Activated CD4-positive, alpha-beta memory T cell treated with anti-CD3 and anti-CD28 coated beads, Interleukin-2, amount 10 ng/mL, durations not matched to agents 7 days and 5 days (primary cell): ENCODE measurements at regions of chr11 and their contacts with region 1.

Region 1: GRCh38 chr11:128157423-128158298 is 429.7 kb downstream of the ETS1 start:
- DNase-seq: peak; percentile 52
- H3K4me3 Mint-ChIP-seq: peak overlapping the region; percentile 53
- H3K27ac Mint-ChIP-seq: peak overlapping the region; percentile 55
- H3K4me1 Mint-ChIP-seq: peaks cover 7% of the 10 kb centered on the region
- H3K27me3 Mint-ChIP-seq: peaks cover 8% of the 10 kb centered on the region

Region 2: DNA sequence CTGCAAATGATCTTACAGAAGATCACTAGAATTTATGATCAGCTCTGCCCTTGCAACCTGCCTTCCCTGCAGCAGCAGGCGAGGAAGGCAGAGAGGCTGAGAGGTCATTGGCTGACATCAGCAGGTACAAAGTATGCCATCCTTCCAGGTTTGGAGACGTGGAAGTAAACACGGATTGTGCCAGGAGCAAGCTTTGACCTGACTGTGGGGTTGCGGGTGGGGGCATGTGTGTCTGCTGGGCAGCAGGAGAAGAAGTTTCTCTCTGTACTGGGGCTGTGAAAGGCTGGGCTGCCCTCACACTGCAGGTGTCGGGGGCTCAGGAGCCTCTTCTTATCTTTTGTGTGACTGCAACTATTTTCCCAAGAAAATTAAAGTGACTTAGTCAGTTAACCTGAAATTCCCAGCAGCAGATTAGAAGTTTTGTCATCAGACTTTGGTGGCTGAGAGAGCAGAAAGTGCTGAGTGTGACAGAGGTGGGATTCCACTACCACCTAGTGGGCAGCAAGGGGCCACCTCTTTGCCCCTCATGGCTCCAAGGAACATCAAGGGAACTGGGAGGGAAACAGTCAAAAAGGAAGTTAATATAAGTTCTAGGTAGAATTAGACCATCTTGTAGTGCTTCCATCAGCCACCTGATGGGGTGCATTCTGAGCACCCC is 136.2 kb before region 1 on chr11:
- CTCF ChIA-PET with region 1: interaction called, 12 read pairs
- POLR2A ChIA-PET with region 1: no interaction called
- DNase-seq: no peak
- H3K4me3 Mint-ChIP-seq: no peak overlapping the region
- H3K27ac Mint-ChIP-seq: no peak overlapping the region
- H3K4me1 Mint-ChIP-seq: peaks cover 16% of the 10 kb centered on the region
- H3K27me3 Mint-ChIP-seq: peaks cover 9% of the 10 kb centered on the region

Region 3: DNA sequence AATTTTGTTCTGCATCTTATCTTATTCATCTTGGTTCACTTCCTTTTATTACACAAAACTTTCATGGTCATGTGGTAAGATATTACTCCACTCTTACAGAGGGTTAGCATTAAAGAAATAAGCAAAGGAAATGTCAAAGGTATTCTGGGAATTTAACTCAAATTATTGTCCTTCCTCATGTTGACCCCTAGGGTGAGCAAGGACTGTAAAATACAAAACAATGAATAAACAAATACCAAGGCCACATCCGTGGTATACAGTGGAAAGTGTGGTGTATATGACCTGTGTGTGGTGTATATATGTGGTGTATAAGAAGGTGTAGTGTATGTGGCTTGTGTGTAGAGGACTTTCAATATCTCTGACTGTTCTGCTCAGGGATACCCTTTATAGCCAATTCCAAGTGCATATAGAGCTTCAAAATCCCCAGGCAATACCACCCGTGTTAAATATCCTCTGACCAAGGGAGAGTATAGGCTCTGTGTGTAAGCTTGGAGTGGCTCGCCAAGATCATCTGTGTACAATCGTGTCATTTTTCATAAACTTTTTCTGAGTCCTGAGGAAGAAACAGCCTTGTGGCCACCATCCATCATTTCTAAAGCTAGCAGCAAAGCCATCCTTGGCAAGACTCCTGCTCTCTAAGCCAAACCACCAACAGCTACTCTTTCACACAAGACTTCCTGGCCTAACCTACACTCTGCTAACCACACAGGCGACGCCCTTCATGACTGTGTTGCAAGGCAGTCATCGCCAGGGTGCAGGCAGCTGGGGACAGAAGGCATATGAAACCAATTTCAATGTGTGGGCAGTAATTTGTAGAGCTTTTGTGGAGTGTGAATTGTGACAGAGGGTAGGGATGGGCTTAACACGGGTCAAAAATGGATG is 118.3 kb before region 1 on chr11:
- CTCF ChIA-PET with region 1: interaction called, 106 read pairs
- POLR2A ChIA-PET with region 1: interaction called, 14 read pairs
- DNase-seq: peak; percentile 89
- H3K4me3 Mint-ChIP-seq: peak overlapping the region; percentile 64
- H3K27ac Mint-ChIP-seq: peak overlapping the region; percentile 98
- H3K4me1 Mint-ChIP-seq: peaks cover 48% of the 10 kb centered on the region
- H3K27me3 Mint-ChIP-seq: no peaks in the 10 kb centered on the region

Region 4: DNA sequence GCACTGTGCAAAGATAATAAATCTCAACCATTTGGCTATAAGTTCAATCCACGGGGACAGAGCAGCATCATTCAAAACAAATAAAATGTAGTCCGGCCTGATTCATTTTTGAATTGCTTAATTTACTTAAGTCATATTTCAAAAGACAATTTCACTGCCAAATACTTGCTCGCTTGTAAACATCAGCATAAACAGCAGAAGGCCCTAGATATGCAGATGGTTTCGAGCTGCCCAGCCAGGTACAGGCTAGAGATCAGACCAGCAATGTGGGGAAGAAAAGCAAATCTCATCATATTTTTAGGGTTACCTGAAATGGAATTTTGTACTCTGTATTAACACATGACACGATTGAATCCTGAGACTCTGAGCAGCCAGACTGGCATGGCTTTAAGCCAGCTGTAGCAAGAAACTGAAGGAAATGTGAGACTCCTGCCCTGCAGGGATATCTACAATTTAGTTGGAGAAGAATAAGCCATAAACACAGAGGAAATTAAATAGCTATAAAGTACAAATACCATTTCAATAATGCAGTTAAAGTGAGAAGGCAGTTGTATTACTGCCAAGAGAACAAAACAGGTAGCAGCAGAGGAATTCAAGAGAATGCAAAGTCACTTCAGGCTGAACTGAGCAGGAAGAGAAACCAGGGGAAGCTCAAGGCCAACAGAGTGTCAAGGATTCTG is 10.6 kb before region 1 on chr11:
- CTCF ChIA-PET with region 1: interaction called, 25 read pairs
- POLR2A ChIA-PET with region 1: no interaction called
- DNase-seq: no peak
- H3K4me3 Mint-ChIP-seq: no peak overlapping the region
- H3K27ac Mint-ChIP-seq: no peak overlapping the region
- H3K4me1 Mint-ChIP-seq: no peaks in the 10 kb centered on the region
- H3K27me3 Mint-ChIP-seq: peaks cover 3% of the 10 kb centered on the region

Region 5: GRCh38 chr11:128831174-128832120 is 673.8 kb after region 1 on chr11:
- CTCF ChIA-PET with region 1: interaction called, 54 read pairs
- POLR2A ChIA-PET with region 1: interaction called, 4 read pairs
- DNase-seq: peak; percentile 89
- H3K4me3 Mint-ChIP-seq: no peak overlapping the region
- H3K27ac Mint-ChIP-seq: peak overlapping the region; percentile 29
- H3K4me1 Mint-ChIP-seq: peaks cover 28% of the 10 kb centered on the region
- H3K27me3 Mint-ChIP-seq: no peaks in the 10 kb centered on the region

Region 6: DNA sequence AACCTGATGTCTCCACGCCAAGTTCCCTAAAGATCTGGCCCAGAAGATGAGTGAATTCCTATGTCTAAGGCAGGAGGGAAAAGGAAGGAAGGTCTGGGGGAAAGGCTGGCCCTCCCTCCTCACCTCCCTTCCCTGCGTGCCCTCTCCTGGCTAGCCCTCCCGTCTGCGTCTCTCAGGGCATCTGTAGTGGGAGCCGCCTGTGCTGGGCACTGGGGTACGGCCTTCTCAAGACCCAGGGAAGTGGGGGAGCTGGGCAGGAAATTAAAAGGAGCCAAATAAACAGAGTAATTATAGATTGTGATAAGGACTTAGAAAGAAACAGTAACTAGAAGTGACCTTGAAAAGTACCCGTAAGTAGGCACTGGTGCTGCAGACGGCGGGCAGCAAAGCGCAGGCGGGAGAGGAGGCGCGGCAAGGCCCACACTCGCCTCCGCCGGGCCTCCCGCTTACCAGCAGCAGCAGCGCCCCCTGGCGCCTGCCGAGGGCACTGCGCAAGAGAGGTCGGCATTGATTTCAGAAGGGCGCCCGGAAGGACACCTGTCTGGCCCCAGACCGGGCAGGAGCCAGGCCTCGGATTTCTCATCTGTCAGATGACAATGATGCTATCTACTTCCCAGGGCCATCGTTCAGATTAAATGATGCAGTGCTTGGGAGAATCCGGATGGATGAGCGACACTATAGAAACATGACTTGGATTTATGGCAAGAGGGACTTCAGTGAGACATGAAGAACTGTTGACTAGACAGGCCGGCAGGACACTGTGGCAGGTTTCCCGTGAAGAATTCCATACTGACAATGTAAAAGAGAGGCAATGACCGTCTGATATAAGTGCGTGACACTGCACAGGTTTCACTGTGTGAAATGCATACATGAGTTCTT is 702.1 kb after region 1 on chr11:
- CTCF ChIA-PET with region 1: interaction called, 18 read pairs
- POLR2A ChIA-PET with region 1: no interaction called
- DNase-seq: peak; percentile 82
- H3K4me3 Mint-ChIP-seq: no peak overlapping the region
- H3K27ac Mint-ChIP-seq: no peak overlapping the region
- H3K4me1 Mint-ChIP-seq: peaks cover 8% of the 10 kb centered on the region
- H3K27me3 Mint-ChIP-seq: peaks cover 7% of the 10 kb centered on the region